SK-N-SH (cell line): ENCODE measurements at regions of chr7 and their contacts with region 1.

Region 1: GRCh38 chr7:128322040-128322643 is 21.6 kb downstream of the RBM28 start:
- DNase-seq: peak; percentile 47
- H3K4me3 ChIP-seq: no peak overlapping the region
- H3K27ac ChIP-seq: peak overlapping the region in 1 of 2 experiments; percentile 16; a peak in 1 of 4 replicates
- H3K4me1 ChIP-seq: peaks cover 0 to 6% of the 10 kb centered on the region in 2 experiments; a peak in 2 of 4 replicates
- H3K27me3 ChIP-seq: no peaks in the 10 kb centered on the region
- CTCF ChIP-seq: peak; percentile 68
- EP300 ChIP-seq: no peak
- RAD21 ChIP-seq: peak; percentile 70

Region 2: GRCh38 chr7:128266883-128267607 is 55.1 kb before region 1 on chr7:
- CTCF ChIA-PET with region 1: interaction called, 13 read pairs
- POLR2A ChIA-PET with region 1: interaction called, 4 read pairs
- DNase-seq: peak; percentile 90
- H3K4me3 ChIP-seq: peak overlapping the region; percentile 30 to 33; a peak in 3 of 4 replicates
- H3K27ac ChIP-seq: peak overlapping the region; percentile 54 to 99
- H3K4me1 ChIP-seq: peaks cover 18 to 41% of the 10 kb centered on the region in 2 experiments; a peak in 3 of 4 replicates
- H3K27me3 ChIP-seq: no peaks in the 10 kb centered on the region
- CTCF ChIP-seq: peak; percentile 34
- EP300 ChIP-seq: peak; percentile 8 to 77; a peak in 3 of 4 replicates
- RAD21 ChIP-seq: peak; percentile 41

Region 3: GRCh38 chr7:128311013-128311412 is 11.1 kb before region 1 on chr7:
- CTCF ChIA-PET with region 1: interaction called, 20 read pairs
- POLR2A ChIA-PET with region 1: interaction called, 3 read pairs
- DNase-seq: no peak
- H3K4me3 ChIP-seq: no peak overlapping the region
- H3K27ac ChIP-seq: no peak overlapping the region
- H3K4me1 ChIP-seq: no peaks in the 10 kb centered on the region; a peak in 1 of 4 replicates
- H3K27me3 ChIP-seq: no peaks in the 10 kb centered on the region
- CTCF ChIP-seq: no peak
- EP300 ChIP-seq: no peak
- RAD21 ChIP-seq: no peak

Region 4: GRCh38 chr7:128335734-128336133 is 13.6 kb after region 1 on chr7:
- CTCF ChIA-PET with region 1: interaction called, 18 read pairs
- POLR2A ChIA-PET with region 1: no interaction called
- DNase-seq: no peak
- H3K4me3 ChIP-seq: no peak overlapping the region
- H3K27ac ChIP-seq: no peak overlapping the region
- H3K4me1 ChIP-seq: no peaks in the 10 kb centered on the region
- H3K27me3 ChIP-seq: no peaks in the 10 kb centered on the region
- CTCF ChIP-seq: no peak
- EP300 ChIP-seq: no peak
- RAD21 ChIP-seq: no peak

Region 5: GRCh38 chr7:128904381-128905197 is 582.4 kb after region 1 on chr7:
- CTCF ChIA-PET with region 1: no interaction called
- POLR2A ChIA-PET with region 1: no interaction called
- DNase-seq: peak; percentile 87
- H3K4me3 ChIP-seq: no peak overlapping the region
- H3K27ac ChIP-seq: no peak overlapping the region
- H3K4me1 ChIP-seq: peaks cover 0 to 6% of the 10 kb centered on the region in 2 experiments; a peak in 1 of 4 replicates
- H3K27me3 ChIP-seq: 0 out of 2 replicates have a peak, but pooled peaks cover 8% of the 10 kb centered on the region
- CTCF ChIP-seq: peak; percentile 74
- EP300 ChIP-seq: no peak
- RAD21 ChIP-seq: peak; percentile 79